ENCODE measurements at regions of chr6 and their contacts with region 1.

Region 1: GRCh38 chr6:43436577-43437282 is 9.4 kb downstream of the ABCC10 start:
- DNase-seq: peak; percentile 85 to 95
- H3K4me3 ChIP-seq: peak overlapping the region; percentile 9; the same call in 1 of the 2 replicates
- H3K27ac ChIP-seq: peak overlapping the region; percentile 79
- H3K4me1 ChIP-seq: peaks cover 36% of the 10 kb centered on the region
- H3K27me3 ChIP-seq: no peaks in the 10 kb centered on the region
- CTCF ChIP-seq: no peak

Region 2: GRCh38 chr6:41878246-41878645 is 1558.5 kb before region 1 on chr6:
- CTCF ChIA-PET with region 1: no interaction called
- POLR2A ChIA-PET with region 1: interaction called, 16 read pairs
- intact Hi-C with region 1: no loop called
- DNase-seq: no peak
- H3K4me3 ChIP-seq: no peak overlapping the region
- H3K27ac ChIP-seq: no peak overlapping the region
- H3K4me1 ChIP-seq: no peaks in the 10 kb centered on the region
- H3K27me3 ChIP-seq: no peaks in the 10 kb centered on the region
- CTCF ChIP-seq: no peak

Region 3: GRCh38 chr6:42555477-42556457 is 881.0 kb before region 1 on chr6:
- CTCF ChIA-PET with region 1: no interaction called
- POLR2A ChIA-PET with region 1: no interaction called
- intact Hi-C with region 1: no loop called
- DNase-seq: peak in 1 of 2 experiments; percentile 55
- H3K4me3 ChIP-seq: no peak overlapping the region
- H3K27ac ChIP-seq: no peak overlapping the region
- H3K4me1 ChIP-seq: no peaks in the 10 kb centered on the region
- H3K27me3 ChIP-seq: no peaks in the 10 kb centered on the region
- CTCF ChIP-seq: no peak

Region 4: DNA sequence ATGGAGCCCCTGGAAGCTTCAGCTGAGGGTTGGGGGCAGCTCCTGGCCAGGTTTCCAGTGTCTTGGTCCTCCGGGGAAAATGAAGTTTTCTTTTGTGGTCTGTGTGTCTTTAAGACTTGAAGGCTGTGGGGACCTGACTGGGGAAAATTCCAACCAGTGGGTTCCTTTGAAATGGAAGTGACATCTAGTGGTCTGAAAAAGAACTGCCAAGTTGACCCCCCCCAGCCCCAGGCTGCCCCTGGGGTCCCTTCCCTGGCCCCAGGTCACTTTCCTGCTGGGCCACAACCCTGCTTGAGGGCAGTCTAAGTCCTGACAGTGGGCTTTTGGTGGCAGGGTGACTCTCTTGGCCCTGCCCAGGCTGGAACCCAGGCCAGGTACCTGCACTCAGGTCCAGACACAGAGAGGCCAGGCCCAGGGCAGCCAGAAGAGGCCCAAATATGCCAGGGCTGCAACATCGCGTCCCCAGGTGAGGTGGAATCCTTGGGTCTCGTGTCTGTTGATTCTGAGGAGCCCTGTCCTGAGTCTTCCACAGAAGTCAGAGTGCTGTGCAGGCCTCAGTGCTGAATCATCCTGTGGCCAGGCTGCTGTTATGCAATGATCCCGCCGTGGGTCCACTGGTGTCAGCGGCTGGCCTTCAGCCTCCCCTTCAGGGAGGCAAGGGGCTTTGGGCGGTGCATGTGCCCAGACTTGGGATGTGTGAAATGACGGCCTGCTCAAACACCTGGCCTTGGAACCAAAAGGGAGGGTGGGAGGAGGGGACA is 401.7 kb after region 1 on chr6:
- CTCF ChIA-PET with region 1: no interaction called
- POLR2A ChIA-PET with region 1: no interaction called
- intact Hi-C with region 1: no loop called
- DNase-seq: peak; percentile 39 to 57
- H3K4me3 ChIP-seq: no peak overlapping the region; the same call in 1 of the 2 replicates
- H3K27ac ChIP-seq: peak overlapping the region; percentile 73
- H3K4me1 ChIP-seq: peaks cover 36% of the 10 kb centered on the region
- H3K27me3 ChIP-seq: no peaks in the 10 kb centered on the region
- CTCF ChIP-seq: peak; percentile 85

Region 5: DNA sequence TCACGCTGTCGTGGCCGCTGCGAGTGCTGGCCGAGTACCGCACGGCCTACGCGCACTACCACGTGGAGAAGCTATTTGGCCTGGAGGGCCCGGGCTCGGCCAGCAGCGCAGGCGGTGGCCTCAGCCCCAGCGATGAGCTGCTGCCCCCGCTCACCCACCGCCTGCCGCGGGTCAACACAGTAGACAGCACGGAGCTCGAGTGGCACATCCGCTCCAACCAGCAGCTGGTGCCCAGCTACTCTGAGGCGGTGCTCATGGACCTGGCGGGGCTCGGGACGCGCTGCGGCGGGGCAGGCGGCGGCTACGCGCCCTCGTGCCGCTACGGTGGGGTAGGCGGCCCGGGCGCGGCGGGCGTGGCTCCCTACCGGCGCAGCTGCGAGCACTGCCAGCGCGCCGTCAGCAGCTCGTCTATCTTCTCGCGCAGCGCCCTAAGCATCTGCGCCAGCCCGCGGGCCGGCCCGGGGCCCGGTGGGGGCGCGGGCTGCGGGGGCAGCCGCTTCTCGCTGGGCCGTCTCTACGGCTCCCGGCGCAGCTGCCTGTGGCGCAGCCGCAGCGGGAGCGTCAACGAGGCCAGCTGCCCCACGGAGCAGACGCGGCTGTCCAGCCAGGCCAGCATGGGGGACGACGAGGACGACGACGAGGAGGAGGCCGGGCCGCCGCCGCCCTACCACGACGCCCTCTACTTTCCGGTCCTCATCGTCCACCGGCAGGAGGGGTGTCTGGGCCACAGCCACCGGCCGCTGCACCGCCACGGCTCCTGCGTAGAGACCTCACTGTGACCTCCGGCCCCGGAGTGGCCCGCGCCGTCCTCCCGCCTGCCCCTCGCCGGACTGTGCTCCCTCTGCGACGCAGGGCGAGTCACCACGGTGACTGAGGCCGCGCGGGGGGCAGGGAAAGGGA is 839.3 kb after region 1 on chr6:
- CTCF ChIA-PET with region 1: no interaction called
- POLR2A ChIA-PET with region 1: no interaction called
- intact Hi-C with region 1: no loop called
- DNase-seq: no peak
- H3K4me3 ChIP-seq: no peak overlapping the region
- H3K27ac ChIP-seq: no peak overlapping the region
- H3K4me1 ChIP-seq: no peaks in the 10 kb centered on the region
- H3K27me3 ChIP-seq: peaks cover 10% of the 10 kb centered on the region
- CTCF ChIP-seq: no peak